ENCODE measurements at regions of chr17 and their contacts with region 1.

Region 1: DNA sequence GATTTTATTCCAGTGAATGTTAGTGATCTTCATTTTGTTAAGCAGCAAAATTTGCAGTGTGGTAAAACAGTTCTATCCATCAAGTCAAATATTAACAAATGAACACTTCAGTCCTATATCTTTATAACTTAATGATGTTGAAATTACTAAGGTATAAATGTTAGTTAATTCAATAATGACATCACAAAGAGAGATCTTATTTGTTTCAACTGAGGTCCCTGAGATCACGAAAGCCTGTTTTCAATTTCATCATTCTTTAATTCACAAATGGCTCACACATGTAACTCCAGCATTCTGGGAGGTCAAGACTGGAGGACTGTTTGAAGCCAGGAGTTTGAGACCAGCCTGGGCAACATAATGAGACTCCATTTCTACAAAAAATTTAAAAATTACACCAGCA is 13.9 kb downstream of the SMURF2 start:
- DNase-seq: no peak
- H3K4me3 Mint-ChIP-seq: no peak overlapping the region
- H3K27ac Mint-ChIP-seq: no peak overlapping the region
- H3K4me1 Mint-ChIP-seq: peaks cover 33% of the 10 kb centered on the region
- H3K27me3 Mint-ChIP-seq: no peaks in the 10 kb centered on the region

Region 2: DNA sequence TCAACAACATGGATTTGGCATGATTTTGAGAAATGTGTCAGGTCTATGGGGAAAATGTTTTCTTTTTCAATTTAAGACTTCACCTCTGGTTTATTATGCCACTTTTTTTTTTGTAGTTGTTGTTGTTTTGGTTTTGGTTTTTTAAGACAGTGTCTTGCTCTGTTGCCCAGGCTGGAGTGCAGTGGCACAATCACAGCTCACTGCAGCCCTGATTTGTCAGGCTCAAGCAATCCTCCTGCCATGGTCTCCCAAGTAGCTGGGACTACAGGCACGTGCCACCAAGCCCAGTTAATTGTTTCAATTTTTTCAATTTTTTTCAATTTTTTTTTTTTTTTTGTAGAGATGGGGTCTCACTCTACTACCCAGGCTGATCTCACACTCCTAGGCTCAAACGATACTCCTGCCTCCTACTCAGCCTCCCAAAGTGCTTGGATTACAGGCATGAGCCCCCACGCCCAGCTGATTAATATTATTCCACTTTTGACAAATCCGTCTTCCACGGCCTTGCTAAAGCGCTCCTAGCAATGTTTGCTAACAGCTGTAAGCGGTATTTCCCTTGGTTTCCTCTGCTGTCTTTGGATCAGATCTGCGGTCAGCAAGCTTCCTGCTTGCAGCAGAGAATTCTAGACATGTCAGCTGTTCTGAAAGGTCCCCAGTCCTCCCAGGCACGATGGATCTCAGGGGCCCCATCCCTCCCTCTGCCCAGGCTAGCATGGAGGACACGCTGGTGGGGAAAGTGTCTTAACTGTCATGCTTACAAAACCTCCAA is 206.3 kb before region 1 on chr17:
- CTCF ChIA-PET with region 1: no interaction called
- intact Hi-C with region 1: loop called (anchors 5 kb)
- DNase-seq: peak; percentile 53
- H3K4me3 Mint-ChIP-seq: peak overlapping the region; percentile 42
- H3K27ac Mint-ChIP-seq: peak overlapping the region; percentile 57
- H3K4me1 Mint-ChIP-seq: peaks cover 25% of the 10 kb centered on the region
- H3K27me3 Mint-ChIP-seq: no peaks in the 10 kb centered on the region

Region 3: DNA sequence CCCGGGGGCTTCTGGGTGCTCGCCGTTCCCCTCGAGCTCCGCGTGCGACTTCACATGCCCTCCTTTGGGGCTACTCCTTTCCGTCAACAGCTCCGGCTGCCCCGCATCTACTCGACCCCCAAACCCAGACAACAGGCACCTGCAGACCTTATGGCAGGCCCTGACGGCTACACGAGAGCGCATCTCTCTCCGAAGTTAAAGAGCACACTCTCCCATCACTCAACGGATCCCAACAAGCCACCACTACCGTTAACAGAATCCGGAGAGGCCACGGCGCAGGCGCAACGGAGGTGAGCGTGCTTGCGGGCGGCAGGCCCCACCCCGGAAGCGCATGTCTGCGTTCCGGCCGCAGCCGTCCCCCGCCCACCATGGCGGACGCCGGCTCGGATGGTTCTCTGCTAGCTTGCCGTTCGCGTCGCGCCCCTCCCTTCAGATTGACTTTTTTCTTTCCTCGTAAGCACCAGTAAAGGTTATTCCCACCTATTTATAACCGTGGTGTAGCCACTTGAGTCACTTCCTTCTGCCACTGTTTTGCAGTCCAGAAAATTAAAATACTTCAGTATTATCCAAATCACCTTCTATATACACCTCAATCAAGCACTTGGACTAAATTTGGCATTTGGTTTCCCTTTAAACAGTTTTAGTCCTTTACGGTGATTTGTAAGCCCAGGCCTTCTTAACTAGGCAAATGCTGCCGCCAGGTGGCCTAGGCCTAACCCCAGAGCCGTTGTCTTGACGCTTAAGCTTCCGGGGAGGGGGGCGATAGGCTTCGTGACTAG is 151.3 kb before region 1 on chr17 and contains the start of gene POLG2:
- CTCF ChIA-PET with region 1: interaction called, 4 read pairs
- intact Hi-C with region 1: loop called (anchors 2 kb)
- DNase-seq: peak; percentile 96
- H3K4me3 Mint-ChIP-seq: peak within 1 kb of the TSS; percentile 100
- H3K27ac Mint-ChIP-seq: peak within 1 kb of the TSS; percentile 97
- H3K4me1 Mint-ChIP-seq: peaks cover 74% of the 10 kb centered on the region
- H3K27me3 Mint-ChIP-seq: no peaks in the 10 kb centered on the region
- total RNA-seq, gene POLG2: 23.4 to 26.9 TPM

Region 4: GRCh38 chr17:64572638-64573154 is 75.5 kb before region 1 on chr17:
- CTCF ChIA-PET with region 1: interaction called, 8 read pairs
- intact Hi-C with region 1: loop called (anchors 2 kb)
- DNase-seq: peak; percentile 7
- H3K4me3 Mint-ChIP-seq: no peak overlapping the region
- H3K27ac Mint-ChIP-seq: peak overlapping the region; percentile 70
- H3K4me1 Mint-ChIP-seq: peaks cover 14% of the 10 kb centered on the region
- H3K27me3 Mint-ChIP-seq: no peaks in the 10 kb centered on the region

Region 5: DNA sequence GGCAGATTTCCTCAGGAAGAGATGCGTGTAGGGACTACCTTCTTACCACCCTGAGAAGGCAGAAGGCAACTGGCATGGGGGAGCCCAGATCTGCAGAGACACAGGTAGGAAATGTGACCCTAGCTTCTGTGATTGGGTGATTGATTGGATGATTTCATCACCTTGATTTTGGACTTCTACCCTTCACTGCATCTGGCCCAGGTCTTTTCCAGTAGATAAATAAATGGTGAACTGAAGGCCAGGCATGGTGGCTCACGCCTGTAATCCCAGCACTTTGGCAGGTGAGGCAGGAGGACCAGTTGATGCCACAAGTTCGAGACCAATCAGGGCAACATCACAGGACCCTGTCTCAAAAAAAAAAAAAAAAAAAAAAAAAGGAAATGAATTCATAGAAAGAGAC is 28.5 kb after region 1 on chr17:
- CTCF ChIA-PET with region 1: no interaction called
- intact Hi-C with region 1: no loop called
- DNase-seq: no peak
- H3K4me3 Mint-ChIP-seq: no peak overlapping the region
- H3K27ac Mint-ChIP-seq: no peak overlapping the region
- H3K4me1 Mint-ChIP-seq: no peaks in the 10 kb centered on the region
- H3K27me3 Mint-ChIP-seq: no peaks in the 10 kb centered on the region

Region 6: DNA sequence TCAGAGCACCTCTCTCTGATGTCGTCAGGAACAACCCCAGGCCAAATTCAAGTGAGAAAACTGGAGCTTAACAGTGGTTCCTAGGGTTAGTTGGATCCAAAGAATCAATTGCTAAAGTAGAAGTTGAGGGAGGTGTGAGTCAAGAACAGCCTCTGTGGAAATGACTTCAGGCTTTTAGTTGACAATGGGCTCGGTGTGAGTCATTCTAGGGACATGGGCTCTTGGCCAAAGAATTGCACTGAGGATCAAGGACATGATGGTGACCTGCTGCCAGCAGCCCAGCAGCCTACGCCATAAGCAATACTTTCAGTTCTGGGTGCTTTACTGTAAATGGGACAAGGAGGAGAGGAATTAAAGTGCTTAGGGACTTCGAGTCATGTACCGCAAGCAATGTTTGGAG is 46.0 kb after region 1 on chr17:
- CTCF ChIA-PET with region 1: no interaction called
- intact Hi-C with region 1: no loop called
- DNase-seq: no peak
- H3K4me3 Mint-ChIP-seq: no peak overlapping the region
- H3K27ac Mint-ChIP-seq: no peak overlapping the region
- H3K4me1 Mint-ChIP-seq: no peaks in the 10 kb centered on the region
- H3K27me3 Mint-ChIP-seq: no peaks in the 10 kb centered on the region

Region 7: GRCh38 chr17:64736804-64737492 is 88.7 kb after region 1 on chr17:
- CTCF ChIA-PET with region 1: interaction called, 10 read pairs
- intact Hi-C with region 1: loop called (anchors 5 kb)
- DNase-seq: peak; percentile 80
- H3K4me3 Mint-ChIP-seq: no peak overlapping the region
- H3K27ac Mint-ChIP-seq: no peak overlapping the region
- H3K4me1 Mint-ChIP-seq: peaks cover 13% of the 10 kb centered on the region
- H3K27me3 Mint-ChIP-seq: no peaks in the 10 kb centered on the region

Measured in activated naive CD4-positive, alpha-beta T cell treated with anti-CD3 and anti-CD28 coated beads for 36 hours (primary cell).